ENCODE measurements at regions of chr6 and their contacts with region 1.

Region 1: DNA sequence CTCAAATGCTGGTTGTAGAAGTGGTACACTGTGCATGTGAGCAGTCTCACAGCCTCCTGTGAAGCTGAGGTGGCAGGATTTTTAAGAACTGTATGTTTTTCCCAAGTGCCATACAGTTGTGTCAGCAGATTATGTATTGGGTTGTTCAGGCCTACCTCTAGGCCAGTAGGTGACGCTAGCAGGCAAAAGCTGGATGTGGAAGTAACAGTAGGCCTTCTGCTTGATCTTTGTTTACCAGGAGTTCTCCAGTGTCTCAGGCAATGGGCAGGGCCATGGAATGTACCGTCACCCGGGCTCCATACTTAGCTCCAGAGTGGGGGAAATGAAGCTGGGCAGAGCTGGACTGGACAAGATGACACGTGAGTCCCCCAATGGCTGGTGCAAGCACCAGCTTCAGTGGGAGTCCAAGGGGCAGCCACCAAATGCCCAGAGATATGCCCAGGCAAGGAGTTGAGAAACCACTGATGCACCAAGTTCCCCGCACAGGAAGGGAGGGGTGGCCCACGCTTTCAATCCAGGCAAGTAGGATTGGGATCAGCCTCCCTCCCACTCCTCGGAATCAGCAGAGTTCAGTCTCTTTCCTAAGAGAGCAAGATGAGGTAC is 289.7 kb downstream of the HTR1B start:
- DNase-seq: no peak
- H3K4me3 ChIP-seq: no peak overlapping the region
- H3K27ac ChIP-seq: no peak overlapping the region
- H3K4me1 ChIP-seq: no peaks in the 10 kb centered on the region
- CTCF ChIP-seq: no peak

Region 2: GRCh38 chr6:77034161-77034560 is 139.4 kb before region 1 on chr6:
- CTCF ChIA-PET with region 1: no interaction called
- POLR2A ChIA-PET with region 1: no interaction called
- intact Hi-C with region 1: no loop called
- DNase-seq: no peak
- H3K4me3 ChIP-seq: no peak overlapping the region
- H3K27ac ChIP-seq: no peak overlapping the region
- H3K4me1 ChIP-seq: no peaks in the 10 kb centered on the region
- CTCF ChIP-seq: no peak

Region 3: GRCh38 chr6:77774457-77774856 is 600.9 kb after region 1 on chr6:
- CTCF ChIA-PET with region 1: no interaction called
- POLR2A ChIA-PET with region 1: no interaction called
- intact Hi-C with region 1: loop called (anchors 10 kb)
- DNase-seq: no peak
- H3K4me3 ChIP-seq: no peak overlapping the region
- H3K27ac ChIP-seq: no peak overlapping the region
- H3K4me1 ChIP-seq: no peaks in the 10 kb centered on the region
- CTCF ChIP-seq: no peak